Activated B cell treated with CpG ODN at 0.5 μM for 24 hours (primary cell): ENCODE measurements at regions of chr16 and their contacts with region 1.

Region 1: GRCh38 chr16:67268136-67268579 is 11.2 kb upstream of the PLEKHG4 start:
- DNase-seq: no peak
- ATAC-seq: no peak
- H3K4me3 Mint-ChIP-seq: no peak overlapping the region
- H3K27ac Mint-ChIP-seq: no peak overlapping the region
- H3K4me1 Mint-ChIP-seq: no peaks in the 10 kb centered on the region
- H3K27me3 Mint-ChIP-seq: peaks cover 2% of the 10 kb centered on the region
- CTCF ChIP-seq: no peak

Region 2: DNA sequence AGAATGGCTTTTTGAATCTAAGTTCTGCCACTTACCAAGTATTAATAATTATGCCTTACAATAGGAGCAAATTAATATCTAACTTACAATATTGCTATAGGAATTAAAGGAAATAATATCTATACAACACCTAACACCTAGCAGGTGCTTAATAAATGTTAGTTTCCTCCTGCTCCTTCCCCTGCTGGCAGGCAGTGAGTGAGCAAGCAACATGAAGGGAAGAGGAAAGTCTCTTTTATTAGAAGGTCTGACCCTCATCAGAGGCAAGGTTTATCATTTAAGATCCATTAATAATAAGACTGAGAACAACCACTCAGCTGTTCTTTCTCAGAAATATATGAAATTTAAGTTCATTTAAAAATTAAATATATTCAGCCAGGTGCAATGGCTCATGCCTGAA is 510.1 kb before region 1 on chr16:
- CTCF ChIA-PET with region 1: no interaction called
- POLR2A ChIA-PET with region 1: no interaction called
- intact Hi-C with region 1: no loop called
- DNase-seq: no peak
- ATAC-seq: no peak
- H3K4me3 Mint-ChIP-seq: no peak overlapping the region
- H3K27ac Mint-ChIP-seq: no peak overlapping the region
- H3K4me1 Mint-ChIP-seq: no peaks in the 10 kb centered on the region
- H3K27me3 Mint-ChIP-seq: peaks cover 5% of the 10 kb centered on the region
- CTCF ChIP-seq: no peak

Region 3: GRCh38 chr16:68131813-68132706 is 863.9 kb after region 1 on chr16:
- CTCF ChIA-PET with region 1: no interaction called
- POLR2A ChIA-PET with region 1: interaction called, 10 read pairs
- intact Hi-C with region 1: no loop called
- DNase-seq: no peak
- ATAC-seq: no peak
- H3K4me3 Mint-ChIP-seq: peak overlapping the region; percentile 29
- H3K27ac Mint-ChIP-seq: peak overlapping the region; percentile 63
- H3K4me1 Mint-ChIP-seq: peaks cover 56% of the 10 kb centered on the region
- H3K27me3 Mint-ChIP-seq: no peaks in the 10 kb centered on the region
- CTCF ChIP-seq: no peak